ENCODE measurements at regions of chr20 and their contacts with region 1.

Region 1: DNA sequence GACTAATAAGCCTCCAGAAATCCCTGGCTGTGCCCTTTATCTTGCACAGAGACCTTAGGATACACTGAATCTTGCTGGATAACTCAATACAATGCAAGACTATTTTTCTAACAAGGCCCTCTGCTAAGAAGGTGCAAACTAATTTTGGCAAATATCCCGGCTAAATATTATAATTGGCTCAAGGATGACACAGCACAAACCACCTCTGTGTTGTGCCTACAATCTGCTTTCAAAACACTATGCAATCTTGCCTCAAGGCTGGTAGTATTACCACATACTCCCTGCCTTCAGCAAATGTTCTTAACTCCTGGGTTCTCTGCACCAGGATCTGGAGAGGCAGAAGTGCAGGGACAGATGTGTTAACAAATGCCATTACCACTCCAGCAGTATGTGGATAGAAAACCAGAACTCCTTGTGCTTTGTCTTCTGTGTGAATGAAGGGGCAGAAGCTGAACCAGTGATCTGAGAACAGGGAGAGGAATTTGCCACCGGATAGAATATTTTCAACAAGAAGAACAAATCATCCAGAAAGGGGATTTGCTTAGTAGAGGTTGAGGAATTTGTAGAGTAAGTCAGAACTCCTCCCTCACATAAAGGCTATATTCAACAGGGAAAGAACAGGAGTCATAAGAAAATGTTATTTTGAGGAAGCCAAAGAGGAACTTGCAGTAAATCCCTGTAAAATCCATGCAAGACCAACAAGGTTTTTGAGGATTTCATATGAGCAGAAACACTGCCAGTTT is 74.1 kb upstream of the SLC4A11 start:
- DNase-seq: peak in 1 of 2 experiments; percentile 12
- H3K4me3 ChIP-seq: no peak overlapping the region
- H3K4me1 ChIP-seq: peaks cover 6% of the 10 kb centered on the region
- H3K27me3 ChIP-seq: no peaks in the 10 kb centered on the region

Region 2: DNA sequence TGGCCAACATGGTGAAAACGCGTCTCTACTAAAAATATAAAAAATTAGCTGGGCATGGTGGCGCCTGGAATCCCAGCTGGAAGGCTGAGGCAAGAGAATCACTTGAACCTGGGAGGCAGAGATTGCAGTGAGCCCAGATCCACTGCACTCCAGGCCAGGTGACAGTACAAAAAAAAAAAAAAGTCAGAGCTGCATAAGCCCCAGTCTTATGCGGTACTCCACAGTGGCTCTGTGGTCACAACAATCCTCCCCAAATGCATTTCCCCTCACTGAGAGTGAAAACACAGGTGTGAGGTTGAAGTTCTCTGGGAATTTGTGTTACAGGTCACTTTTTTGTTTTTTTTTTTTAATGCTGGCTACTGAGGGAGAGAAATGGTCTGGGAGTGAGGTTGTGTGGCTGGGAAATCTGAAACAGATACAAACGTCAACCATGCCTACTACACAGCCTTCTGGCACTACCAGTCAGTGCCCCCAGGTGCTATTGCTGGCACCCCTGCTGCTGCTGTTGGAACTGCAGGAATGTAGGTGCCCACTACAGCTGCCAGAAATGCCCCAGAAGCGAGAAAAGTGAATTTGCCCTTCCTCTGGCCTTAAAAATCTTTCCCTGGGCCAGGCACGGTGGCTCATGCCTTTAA is 261.6 kb before region 1 on chr20:
- in situ Hi-C with region 1: loop called (anchors 10 kb)
- DNase-seq: no peak
- H3K4me3 ChIP-seq: no peak overlapping the region
- H3K4me1 ChIP-seq: peaks cover 4% of the 10 kb centered on the region; the same call in 1 of the 2 replicates
- H3K27me3 ChIP-seq: no peaks in the 10 kb centered on the region

Region 3: DNA sequence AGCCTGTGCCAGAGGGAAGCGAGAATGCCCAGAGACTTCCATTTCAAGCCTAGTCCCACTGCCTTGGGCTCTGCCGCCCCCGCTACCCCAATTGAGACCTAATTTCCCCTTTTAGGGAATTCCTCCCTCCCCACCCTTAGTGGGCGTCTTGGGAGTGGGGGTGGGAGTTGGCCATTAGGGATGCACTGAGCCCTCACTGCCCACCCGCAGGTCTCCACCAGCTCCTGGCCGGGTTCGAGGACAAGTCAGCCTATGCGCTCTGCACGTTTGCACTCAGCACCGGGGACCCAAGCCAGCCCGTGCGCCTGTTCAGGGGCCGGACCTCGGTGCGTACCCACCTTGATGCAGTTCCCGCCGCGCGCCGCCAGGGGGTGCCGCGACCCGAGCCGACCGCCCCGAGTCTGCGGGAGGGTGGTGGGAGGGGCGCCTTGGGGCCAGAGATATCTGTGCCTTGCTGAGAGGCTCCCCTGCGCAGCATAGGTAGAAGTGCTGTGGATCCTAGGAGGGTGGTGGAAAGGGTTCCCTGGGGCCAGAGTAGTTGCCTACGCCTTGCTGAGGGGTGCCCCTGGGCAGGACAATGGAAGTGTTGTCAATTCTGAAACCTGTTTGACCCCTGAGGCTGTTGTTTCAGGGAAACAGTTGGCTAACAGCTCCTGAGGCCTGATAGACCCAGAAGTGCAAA is 94.7 kb before region 1 on chr20:
- in situ Hi-C with region 1: loop called (anchors 10 kb)
- DNase-seq: peak; percentile 40 to 86
- H3K4me3 ChIP-seq: no peak overlapping the region
- H3K4me1 ChIP-seq: no peaks in the 10 kb centered on the region
- H3K27me3 ChIP-seq: no peaks in the 10 kb centered on the region

Region 4: DNA sequence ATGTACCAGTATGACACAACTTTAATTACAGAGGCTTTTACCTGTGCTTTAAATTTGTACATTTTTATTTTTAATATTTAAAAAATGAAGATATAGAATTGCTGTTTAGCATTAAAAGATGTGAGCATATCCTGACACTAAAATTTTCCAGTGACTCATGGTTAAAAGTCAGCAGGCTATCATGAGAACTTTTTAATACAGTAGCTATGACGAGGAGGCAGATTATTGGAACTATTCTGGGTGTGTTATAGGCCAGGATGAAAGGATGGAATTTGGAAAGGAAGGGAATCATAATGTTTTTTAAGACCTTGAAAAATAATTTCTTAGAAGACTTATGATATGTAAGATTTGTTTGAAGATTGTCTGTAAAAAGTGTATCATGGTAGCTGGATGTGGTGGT is 259.0 kb after region 1 on chr20:
- in situ Hi-C with region 1: no loop called
- DNase-seq: no peak
- H3K4me3 ChIP-seq: no peak overlapping the region
- H3K4me1 ChIP-seq: peaks cover 3% of the 10 kb centered on the region; the same call in 1 of the 2 replicates
- H3K27me3 ChIP-seq: no peaks in the 10 kb centered on the region

Measured in HAP-1 (cell line).